ENCODE measurements at regions of chrX and their contacts with region 1.

Region 1: DNA sequence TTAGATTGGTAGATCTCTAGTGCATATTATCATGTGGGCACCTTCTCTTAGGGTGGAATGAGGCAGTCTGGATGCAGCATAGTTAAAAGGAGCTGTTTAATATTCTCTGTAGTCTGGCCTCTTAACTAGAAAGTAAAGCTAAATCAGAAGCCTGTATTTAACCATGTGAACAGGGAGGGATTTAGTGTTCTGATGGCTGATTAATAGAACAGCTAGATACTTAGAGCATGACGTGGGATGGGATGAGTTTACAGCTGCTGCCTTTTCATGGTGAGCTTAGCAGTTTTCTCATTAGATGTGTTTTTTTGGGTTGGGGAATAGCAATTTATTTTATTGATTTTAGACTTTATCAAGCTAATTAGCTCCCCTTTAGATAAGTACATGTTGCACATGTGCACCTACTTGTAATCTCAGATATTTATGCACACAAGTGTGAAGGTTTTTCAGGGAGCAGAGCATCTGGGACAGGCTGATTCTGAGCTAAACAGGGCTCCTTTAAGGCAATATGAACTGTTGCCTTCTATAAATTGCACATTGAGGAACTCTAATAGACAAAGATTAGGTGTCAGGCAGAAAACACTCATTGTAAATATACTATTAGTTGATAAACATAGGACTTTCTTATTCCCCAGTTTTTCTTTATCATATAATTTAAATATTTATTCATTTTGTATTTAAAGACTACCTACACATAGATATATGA is 34.1 kb downstream of the YIPF6 start:
- DNase-seq: peak; percentile 52
- ATAC-seq: peak; percentile 56
- H3K4me3 ChIP-seq: no peak overlapping the region
- H3K27ac ChIP-seq: no peak overlapping the region
- H3K4me1 ChIP-seq: no peaks in the 10 kb centered on the region
- H3K27me3 ChIP-seq: no peaks in the 10 kb centered on the region
- CTCF ChIP-seq: no peak
- POLR2A ChIP-seq: no peak
- RAD21 ChIP-seq: no peak

Region 2: GRCh38 chrX:68699960-68700746 is 167.2 kb after region 1 on chrX:
- CTCF ChIA-PET with region 1: no interaction called
- POLR2A ChIA-PET with region 1: no interaction called
- dilution Hi-C with region 1: no loop called
- in situ Hi-C with region 1: no loop called
- intact Hi-C with region 1: loop called (anchors 10 kb)
- DNase-seq: peak; percentile 55
- ATAC-seq: no peak
- H3K4me3 ChIP-seq: no peak overlapping the region
- H3K27ac ChIP-seq: no peak overlapping the region
- H3K4me1 ChIP-seq: no peaks in the 10 kb centered on the region
- H3K27me3 ChIP-seq: peaks cover 14% of the 10 kb centered on the region; the same call in 1 of the 2 replicates
- CTCF ChIP-seq: no peak
- POLR2A ChIP-seq: no peak
- RAD21 ChIP-seq: no peak

Region 3: GRCh38 chrX:68794461-68794860 is 261.5 kb after region 1 on chrX:
- CTCF ChIA-PET with region 1: no interaction called
- POLR2A ChIA-PET with region 1: no interaction called
- dilution Hi-C with region 1: no loop called
- in situ Hi-C with region 1: no loop called
- intact Hi-C with region 1: no loop called
- DNase-seq: no peak
- ATAC-seq: no peak
- H3K4me3 ChIP-seq: no peak overlapping the region
- H3K27ac ChIP-seq: no peak overlapping the region
- H3K4me1 ChIP-seq: no peaks in the 10 kb centered on the region
- H3K27me3 ChIP-seq: peaks cover 30% of the 10 kb centered on the region
- CTCF ChIP-seq: no peak
- POLR2A ChIP-seq: no peak
- RAD21 ChIP-seq: no peak